Left lung (tissue), 14 donors: ENCODE measurements at regions of chr1 and their contacts with region 1.

Region 1: GRCh38 chr1:159132271-159132881 is 39.0 kb upstream of the CADM3 start:
- DNase-seq: peak; percentile 22 to 85 (median 57)
- ATAC-seq: peak; percentile 67
- H3K4me3 ChIP-seq: no peak overlapping the region
- H3K27ac ChIP-seq: no peak overlapping the region
- H3K4me1 ChIP-seq: no peaks in the 10 kb centered on the region
- H3K27me3 ChIP-seq: peaks cover 0 to 3% of the 10 kb centered on the region in 2 donors
- CTCF ChIP-seq: peak; percentile 77 to 85

Region 2: GRCh38 chr1:159214149-159214760 is 81.9 kb after region 1 on chr1:
- intact Hi-C with region 1: loop called in 1 of 2 experiments (anchors 10 kb)
- DNase-seq: peak in 2 of 4 donors; percentile 16 to 34
- ATAC-seq: peak; percentile 84
- H3K4me3 ChIP-seq: no peak overlapping the region
- H3K27ac ChIP-seq: no peak overlapping the region
- H3K4me1 ChIP-seq: peaks cover 0 to 8% of the 10 kb centered on the region in 2 donors
- H3K27me3 ChIP-seq: peaks cover 0 to 34% of the 10 kb centered on the region in 2 donors
- CTCF ChIP-seq: peak; percentile 88 to 89